ENCODE measurements at regions of chr19 and their contacts with region 1.

Region 1: GRCh38 chr19:11798391-11799330 is at the start of gene ZNF491:
- DNase-seq: peak; percentile 97
- ATAC-seq: peak; percentile 98
- H3K4me3 Mint-ChIP-seq: peak within 1 kb of the TSS; percentile 87
- H3K27ac Mint-ChIP-seq: peak within 1 kb of the TSS; percentile 69
- H3K4me1 Mint-ChIP-seq: peaks cover 14% of the 10 kb centered on the region
- H3K27me3 Mint-ChIP-seq: no peaks in the 10 kb centered on the region
- CTCF ChIP-seq: peak; percentile 48
- total RNA-seq, gene ZNF491: 0.76 to 1.4 TPM

Region 2: DNA sequence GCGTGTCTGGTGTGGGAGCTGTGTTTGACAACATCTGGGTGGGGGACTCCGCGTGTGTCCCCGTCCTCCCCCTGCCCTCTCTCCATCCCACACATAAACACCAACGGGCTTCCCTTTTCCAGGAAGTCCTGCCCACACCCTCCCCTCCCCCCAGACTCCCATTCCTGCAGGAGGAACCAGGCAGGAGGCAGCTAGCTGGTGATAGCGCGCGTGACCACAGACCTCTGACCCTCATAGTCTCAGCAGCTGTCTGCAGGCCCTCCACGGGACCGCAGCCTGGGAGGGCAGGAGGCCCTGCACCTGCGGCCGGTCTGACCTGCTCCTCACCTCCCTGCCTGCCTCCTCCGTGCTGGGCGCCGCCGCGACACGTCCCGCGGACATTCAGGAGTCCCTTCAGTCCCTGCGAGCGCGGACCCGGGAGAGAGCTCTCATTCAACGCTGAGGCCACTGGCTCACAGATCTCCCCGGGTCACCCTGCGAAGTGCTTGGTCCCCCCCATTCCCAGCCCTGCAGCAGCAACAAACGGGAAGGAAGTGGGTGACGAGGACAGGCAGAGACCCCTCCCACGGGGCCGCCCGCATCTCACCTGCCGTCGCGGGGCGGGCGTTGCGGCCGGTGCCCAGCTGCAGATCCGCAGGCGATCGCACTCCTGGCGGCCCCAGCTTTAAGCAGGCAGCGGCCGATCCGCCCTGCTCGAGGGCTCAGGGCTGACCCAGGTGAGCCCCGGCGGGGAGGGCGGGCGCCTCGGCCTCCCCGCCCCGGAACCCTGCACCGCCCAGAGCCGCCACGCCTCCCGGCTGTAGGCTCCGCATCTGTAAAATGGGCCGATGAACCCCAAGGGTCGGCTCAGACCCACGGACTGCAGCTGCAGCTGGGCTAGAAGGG is 220.2 kb before region 1 on chr19:
- CTCF ChIA-PET with region 1: no interaction called
- POLR2A ChIA-PET with region 1: no interaction called
- intact Hi-C with region 1: no loop called
- DNase-seq: peak; percentile 28
- ATAC-seq: peak; percentile 35
- H3K4me3 Mint-ChIP-seq: peak overlapping the region; percentile 67
- H3K27ac Mint-ChIP-seq: no peak overlapping the region
- H3K4me1 Mint-ChIP-seq: peaks cover 39% of the 10 kb centered on the region
- H3K27me3 Mint-ChIP-seq: no peaks in the 10 kb centered on the region
- CTCF ChIP-seq: no peak

Region 3: DNA sequence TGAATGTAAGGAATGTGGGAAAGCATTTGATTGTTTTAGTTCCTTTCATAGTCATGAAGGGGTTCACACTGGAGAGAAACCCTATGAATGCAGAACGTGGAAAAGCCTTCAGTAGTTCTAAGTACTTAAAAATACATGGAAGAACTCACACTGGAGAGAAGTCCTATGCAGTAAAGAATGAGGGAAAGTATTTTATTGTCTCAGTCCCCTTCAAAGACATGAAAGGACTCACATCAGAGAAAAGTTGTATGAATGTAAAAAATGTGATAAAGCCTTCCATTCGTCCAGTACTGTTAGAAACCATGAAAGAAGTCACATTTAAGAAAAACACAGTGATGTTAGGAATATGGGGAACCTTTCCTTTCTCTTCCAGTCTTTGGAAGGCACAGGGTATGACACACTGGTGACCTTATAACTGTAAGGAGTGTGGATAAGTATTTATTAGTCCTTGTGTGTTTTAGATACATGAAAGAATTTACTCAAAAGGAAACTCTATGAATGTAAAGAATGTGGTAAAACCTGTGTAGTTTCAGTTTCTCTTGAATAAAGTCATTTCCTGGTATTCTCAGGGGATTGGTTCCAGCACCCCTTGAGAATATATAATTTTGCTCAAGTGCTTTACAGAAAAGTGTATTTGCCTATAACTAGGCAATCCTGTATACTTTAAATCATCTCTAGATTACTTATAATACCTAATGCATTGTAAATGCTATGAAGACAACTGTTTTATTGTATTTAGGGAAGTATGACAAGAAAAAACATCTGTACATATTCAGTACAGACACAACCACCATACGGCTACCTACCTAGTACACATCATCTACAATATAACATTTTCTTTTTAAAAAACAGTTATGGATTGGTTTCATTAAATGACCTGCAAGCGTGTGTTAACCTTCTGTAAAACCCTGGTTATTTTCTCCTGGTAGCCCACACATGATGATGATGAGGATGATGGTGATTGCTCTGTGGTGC is 112.7 kb before region 1 on chr19:
- CTCF ChIA-PET with region 1: no interaction called
- POLR2A ChIA-PET with region 1: no interaction called
- intact Hi-C with region 1: no loop called
- DNase-seq: no peak
- ATAC-seq: peak; percentile 75
- H3K4me3 Mint-ChIP-seq: no peak overlapping the region
- H3K27ac Mint-ChIP-seq: no peak overlapping the region
- H3K4me1 Mint-ChIP-seq: peaks cover 8% of the 10 kb centered on the region
- H3K27me3 Mint-ChIP-seq: peaks cover 13% of the 10 kb centered on the region
- CTCF ChIP-seq: no peak

Region 4: DNA sequence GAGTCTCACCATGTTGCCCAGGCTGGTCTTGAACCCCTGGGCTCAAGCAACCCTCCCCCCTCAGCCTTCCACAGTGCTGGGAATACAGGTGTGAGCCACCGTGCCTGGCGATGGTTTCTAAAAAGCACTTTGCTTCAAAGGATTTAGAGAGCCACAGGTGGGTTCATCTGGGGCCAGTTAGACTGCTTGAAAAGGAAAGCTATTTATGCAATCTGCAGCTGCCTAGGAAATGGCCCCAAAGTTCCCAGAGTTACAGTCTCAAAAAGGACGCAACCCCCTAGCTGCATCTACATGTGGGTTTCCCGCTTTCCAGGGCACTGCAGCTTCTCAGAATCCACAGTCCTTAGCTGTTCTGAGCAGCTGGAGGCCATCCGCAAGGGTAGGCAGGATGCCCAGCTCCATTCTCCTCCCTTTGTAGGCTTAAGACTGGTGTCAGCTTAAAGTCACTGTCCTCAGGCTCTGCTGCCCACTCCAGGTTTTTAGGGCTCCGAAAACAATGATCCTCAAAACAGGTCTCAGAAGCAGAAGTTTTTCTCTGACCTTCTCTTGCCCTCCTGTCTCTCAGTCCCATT is 101.3 kb before region 1 on chr19:
- CTCF ChIA-PET with region 1: interaction called, 10 read pairs
- POLR2A ChIA-PET with region 1: no interaction called
- intact Hi-C with region 1: no loop called
- DNase-seq: no peak
- ATAC-seq: no peak
- H3K4me3 Mint-ChIP-seq: no peak overlapping the region
- H3K27ac Mint-ChIP-seq: no peak overlapping the region
- H3K4me1 Mint-ChIP-seq: peaks cover 15% of the 10 kb centered on the region
- H3K27me3 Mint-ChIP-seq: peaks cover 29% of the 10 kb centered on the region
- CTCF ChIP-seq: no peak

Region 5: GRCh38 chr19:11747277-11747676 is 51.4 kb before region 1 on chr19:
- CTCF ChIA-PET with region 1: no interaction called
- POLR2A ChIA-PET with region 1: no interaction called
- intact Hi-C with region 1: no loop called
- DNase-seq: no peak
- ATAC-seq: no peak
- H3K4me3 Mint-ChIP-seq: no peak overlapping the region
- H3K27ac Mint-ChIP-seq: no peak overlapping the region
- H3K4me1 Mint-ChIP-seq: no peaks in the 10 kb centered on the region
- H3K27me3 Mint-ChIP-seq: peaks cover 6% of the 10 kb centered on the region
- CTCF ChIP-seq: no peak

Region 6: DNA sequence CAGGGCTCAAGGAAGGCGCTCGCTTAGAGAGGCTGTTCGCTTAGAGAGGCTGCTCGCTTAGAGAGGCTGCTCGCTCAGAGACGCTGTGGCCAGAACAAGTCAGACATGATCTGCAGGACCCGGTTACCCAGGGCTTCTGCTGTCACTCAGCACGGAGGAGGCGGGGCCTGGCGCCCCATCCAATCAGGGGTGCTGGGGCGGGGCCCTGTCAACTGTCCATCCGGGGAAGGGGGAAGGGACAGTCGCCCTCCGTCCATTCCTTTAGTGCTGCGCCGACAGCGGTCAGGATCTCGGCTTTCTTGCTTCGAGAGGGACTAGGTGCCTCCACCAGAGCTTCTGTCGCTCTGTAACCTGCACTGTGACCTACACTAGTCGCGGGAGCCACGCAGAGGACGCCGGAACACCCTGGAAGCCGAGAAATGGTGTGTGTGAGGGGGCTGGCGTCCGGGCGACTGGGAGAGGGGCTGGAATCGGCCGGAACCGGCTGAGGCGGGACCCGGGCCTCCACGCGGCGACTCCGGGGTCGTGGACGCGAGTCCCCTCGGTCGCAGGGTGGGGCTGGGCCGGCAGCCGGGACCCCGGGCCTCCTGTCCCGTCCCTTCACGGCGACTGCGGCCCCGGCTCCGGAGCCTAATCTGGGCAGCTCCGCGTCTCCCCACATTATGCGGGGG is 15.5 kb after region 1 on chr19 and contains the start of gene ZNF440:
- CTCF ChIA-PET with region 1: interaction called, 56 read pairs
- POLR2A ChIA-PET with region 1: interaction called, 8 read pairs
- intact Hi-C with region 1: no loop called
- DNase-seq: peak; percentile 96
- ATAC-seq: peak; percentile 99
- H3K4me3 Mint-ChIP-seq: peak within 1 kb of the TSS; percentile 87
- H3K27ac Mint-ChIP-seq: peak within 1 kb of the TSS; percentile 81
- H3K4me1 Mint-ChIP-seq: peaks cover 22% of the 10 kb centered on the region
- H3K27me3 Mint-ChIP-seq: no peaks in the 10 kb centered on the region
- CTCF ChIP-seq: no peak
- total RNA-seq, gene ZNF440: 7.7 to 8.8 TPM

Region 7: DNA sequence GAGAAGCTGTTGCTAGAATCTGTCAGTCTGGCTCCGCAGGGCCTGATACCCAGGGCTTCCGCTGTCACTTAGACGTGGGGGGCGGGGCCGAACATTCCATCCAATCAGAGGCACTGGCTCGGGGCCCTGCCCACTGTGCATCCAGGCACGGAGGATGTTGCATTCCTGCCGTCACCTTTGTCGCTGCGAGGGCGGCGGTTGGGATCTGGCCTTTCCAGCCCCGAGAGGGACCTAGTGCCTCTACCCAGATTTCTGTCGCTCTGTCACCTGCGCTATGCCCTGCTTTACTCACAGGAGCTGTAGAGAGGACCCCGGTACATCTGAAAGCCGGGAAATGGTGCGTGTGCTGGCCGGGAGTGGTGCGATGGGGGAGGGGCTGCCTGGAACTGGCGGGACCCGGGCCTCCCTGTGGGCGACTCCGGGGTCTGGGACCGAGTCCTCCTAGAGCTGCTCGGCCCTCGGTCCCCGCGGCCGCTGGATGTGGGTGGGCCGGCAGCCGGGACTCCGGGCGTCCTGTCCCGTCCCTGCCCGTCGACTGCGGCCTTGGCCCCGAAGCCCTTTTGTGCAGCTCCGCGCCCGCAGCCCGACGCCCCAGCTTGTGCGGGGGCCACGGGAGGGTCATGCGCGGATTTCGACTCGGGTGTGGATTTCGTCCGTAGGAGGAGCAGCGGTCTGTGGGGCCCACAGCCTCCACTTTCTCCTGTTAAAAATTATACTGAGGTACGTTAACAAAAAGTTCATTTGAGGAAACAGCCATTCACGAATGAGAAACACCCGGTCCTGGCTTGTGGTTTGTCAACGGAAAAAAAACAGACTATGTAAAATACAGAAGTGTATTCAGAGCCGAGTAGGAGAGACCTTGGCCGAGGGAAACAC is 50.2 kb after region 1 on chr19 and contains the start of gene ZNF439:
- CTCF ChIA-PET with region 1: interaction called, 19 read pairs
- POLR2A ChIA-PET with region 1: no interaction called
- intact Hi-C with region 1: no loop called
- DNase-seq: peak; percentile 98
- ATAC-seq: peak; percentile 100
- H3K4me3 Mint-ChIP-seq: peak within 1 kb of the TSS; percentile 83
- H3K27ac Mint-ChIP-seq: peak within 1 kb of the TSS; percentile 88
- H3K4me1 Mint-ChIP-seq: peaks cover 20% of the 10 kb centered on the region
- H3K27me3 Mint-ChIP-seq: no peaks in the 10 kb centered on the region
- CTCF ChIP-seq: no peak
- total RNA-seq, gene ZNF439: 8.7 to 9.6 TPM

Region 8: DNA sequence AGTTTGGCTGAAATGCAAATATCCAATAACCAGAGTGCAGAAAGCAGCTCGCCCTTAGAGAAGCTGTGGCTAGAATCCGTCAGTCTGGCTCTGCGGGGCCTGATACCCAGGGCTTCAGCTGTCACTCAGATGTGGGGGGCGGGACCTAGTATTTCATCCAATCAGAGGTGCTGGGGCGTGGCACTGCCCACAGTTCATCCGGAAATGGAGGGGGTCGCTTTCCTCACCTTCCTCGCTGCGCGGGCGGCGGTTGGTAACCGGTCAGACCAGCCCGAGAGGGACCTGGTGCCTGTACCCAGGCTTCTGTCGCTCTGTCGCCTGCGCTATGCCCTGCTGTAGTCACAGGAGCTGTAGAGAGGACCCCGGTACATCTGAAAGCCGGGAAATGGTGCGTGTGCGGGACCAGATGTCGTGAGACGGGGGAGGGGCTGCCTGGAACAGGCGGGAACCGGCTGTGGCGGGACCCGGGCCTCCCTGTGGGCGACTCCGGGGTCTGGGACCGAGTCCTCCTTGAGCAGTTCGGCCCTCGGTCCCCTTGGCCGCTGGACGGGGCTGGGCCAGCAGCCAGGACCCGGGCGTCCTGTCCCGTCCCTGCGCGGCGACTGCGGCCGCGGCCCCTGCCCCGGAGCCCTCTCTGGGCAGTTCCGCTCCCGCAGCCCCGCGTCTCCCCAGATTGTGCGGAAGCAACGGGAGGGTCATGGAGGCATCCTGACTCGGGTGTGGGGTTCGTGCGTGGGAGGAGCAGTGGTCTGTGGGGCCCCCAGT is 126.4 kb after region 1 on chr19 and contains the start of gene ZNF700:
- CTCF ChIA-PET with region 1: interaction called, 44 read pairs
- POLR2A ChIA-PET with region 1: no interaction called
- intact Hi-C with region 1: no loop called
- DNase-seq: peak; percentile 99
- ATAC-seq: peak; percentile 94
- H3K4me3 Mint-ChIP-seq: peak within 1 kb of the TSS; percentile 93
- H3K27ac Mint-ChIP-seq: peak within 1 kb of the TSS; percentile 99
- H3K4me1 Mint-ChIP-seq: peaks cover 39% of the 10 kb centered on the region
- H3K27me3 Mint-ChIP-seq: no peaks in the 10 kb centered on the region
- CTCF ChIP-seq: no peak
- total RNA-seq, gene ZNF700: 12.0 to 14.0 TPM

Region 9: DNA sequence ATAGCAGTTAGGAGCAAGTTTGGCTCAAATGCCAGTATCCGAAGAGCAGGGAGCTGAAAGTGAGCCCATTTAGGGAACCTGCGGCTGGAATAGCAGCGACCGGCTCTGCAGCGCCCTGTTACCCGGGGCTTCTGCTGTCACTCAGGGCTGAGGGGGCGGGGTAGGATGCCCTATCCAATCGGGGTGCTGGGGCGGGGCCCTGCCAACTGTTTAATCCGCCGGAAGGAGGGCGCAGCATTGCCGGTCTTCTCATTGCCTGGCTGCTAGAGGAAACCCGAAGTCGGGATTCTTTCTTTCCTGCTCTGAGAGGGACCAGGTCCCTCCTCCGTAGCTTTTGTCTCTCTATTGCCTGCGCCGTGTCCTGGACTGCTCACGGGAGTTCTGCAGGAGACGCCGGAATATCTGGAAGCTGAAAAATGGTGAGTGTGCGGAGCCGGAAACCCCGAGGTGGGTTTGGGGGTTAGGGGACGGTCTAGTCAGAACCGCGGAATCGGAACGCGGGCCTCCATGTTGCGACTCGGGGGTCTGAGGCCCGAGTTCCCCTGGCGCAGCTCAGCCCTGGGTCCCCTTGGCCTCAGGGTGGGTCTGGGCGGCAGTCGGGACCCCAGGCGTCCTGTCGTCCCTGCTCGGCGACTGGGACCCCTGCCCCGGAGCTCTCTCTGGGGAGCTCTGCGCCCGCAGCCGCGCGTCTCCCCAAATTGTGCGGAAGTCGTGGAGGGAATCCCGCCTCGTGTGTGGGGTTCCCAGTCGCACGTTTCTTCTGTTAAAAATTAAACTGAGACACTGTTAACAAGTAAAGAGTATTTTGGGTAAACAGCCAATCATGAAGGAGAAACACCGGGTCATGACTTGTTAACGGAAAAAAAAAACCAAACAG is 189.0 kb after region 1 on chr19:
- CTCF ChIA-PET with region 1: interaction called, 28 read pairs
- POLR2A ChIA-PET with region 1: interaction called, 5 read pairs
- intact Hi-C with region 1: no loop called
- DNase-seq: peak; percentile 99
- ATAC-seq: peak; percentile 97
- H3K4me3 Mint-ChIP-seq: peak overlapping the region; percentile 94
- H3K27ac Mint-ChIP-seq: peak overlapping the region; percentile 97
- H3K4me1 Mint-ChIP-seq: peaks cover 31% of the 10 kb centered on the region
- H3K27me3 Mint-ChIP-seq: no peaks in the 10 kb centered on the region
- CTCF ChIP-seq: no peak

Measured in activated CD8-positive, alpha-beta T cell treated with anti-CD3 and anti-CD28 coated beads for 36 hours (primary cell).